A673 (cell line): ENCODE measurements at regions of chr17 and their contacts with region 1.

Region 1: DNA sequence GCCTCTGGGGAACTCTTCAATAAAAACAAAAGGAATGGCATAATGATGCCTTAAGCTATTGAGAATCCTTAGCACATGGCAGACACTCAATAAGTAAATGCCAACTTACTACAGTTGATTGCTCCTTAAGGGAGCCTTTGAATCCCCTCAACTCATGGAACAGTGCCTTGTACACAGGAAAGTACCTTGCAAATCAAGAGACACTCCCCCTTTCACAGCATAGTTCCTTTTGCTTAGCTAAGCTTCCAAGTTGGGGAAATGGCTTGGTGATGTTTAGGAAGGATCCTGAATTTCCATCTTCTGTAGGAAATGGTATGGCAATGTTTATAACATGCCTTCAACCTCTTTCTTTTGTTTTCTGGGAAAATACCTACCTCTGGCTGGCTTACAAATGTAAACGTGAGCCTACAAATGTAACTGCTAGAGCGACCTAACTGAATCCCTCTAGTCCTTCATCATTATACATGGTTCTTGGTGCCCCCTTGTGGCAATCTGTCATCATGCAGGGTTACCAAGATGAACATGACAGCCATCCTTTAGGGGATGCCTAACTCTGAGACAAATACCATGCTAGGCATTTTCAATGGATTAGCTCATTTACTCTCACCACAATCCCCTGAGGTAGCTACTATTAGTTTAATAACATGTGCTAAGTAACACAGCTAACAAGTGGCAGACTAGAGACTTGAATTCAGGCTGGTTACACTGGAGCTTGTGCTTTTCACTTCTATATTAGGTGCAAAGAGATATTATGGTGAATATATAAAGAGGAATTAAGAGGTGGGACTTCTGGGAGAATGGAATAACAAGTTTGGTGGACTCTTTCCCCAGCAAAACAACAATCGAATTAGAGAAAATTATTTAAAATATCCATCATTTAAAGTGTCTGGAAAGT is 65.0 kb downstream of the MMD start:
- DNase-seq: peak; percentile 91
- H3K4me3 ChIP-seq: no peak overlapping the region
- H3K27ac ChIP-seq: no peak overlapping the region
- H3K4me1 ChIP-seq: peaks cover 3% of the 10 kb centered on the region
- H3K27me3 ChIP-seq: no peaks in the 10 kb centered on the region
- CTCF ChIP-seq: peak; percentile 91

Region 2: DNA sequence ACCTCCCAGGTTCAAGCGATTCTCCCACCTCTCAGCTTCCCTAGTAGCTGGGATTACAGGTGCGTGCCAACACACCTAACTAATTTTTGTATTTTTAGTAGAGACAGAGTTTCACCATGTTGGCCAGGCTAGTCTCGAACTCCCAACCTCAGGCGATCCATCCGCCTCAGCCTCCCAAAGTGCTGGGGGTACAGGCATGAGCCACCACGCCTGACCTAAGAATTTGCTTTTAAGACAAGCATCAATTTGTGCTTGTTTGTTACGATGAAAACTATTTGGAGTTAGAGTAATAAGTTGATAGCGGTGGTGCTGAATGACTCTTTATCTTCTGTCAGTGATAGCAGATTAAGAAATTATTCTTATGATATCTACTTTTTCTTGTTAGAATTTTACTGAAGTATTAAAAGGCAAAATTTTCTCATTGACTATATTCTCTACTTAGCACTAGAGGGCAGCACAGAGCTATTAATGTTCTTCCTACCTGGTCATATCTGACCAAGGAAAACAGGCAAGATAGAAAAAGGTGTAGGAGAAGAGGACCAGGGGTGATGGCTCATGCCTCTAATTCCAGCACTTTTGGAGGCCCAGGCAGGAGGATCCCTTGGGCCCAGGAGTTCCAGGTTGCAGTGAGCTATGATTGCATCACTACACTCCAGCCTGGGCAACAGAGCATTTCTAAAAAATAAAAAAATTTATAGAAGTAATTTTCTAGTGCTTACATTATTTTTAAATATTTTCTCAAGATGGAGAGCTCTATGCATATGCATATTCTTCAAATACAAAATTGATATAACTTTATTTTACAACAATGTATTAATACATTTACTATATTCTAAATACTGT is 363.7 kb before region 1 on chr17:
- CTCF ChIA-PET with region 1: interaction called, 10 read pairs
- POLR2A ChIA-PET with region 1: no interaction called
- intact Hi-C with region 1: no loop called
- DNase-seq: peak; percentile 74
- H3K4me3 ChIP-seq: no peak overlapping the region
- H3K27ac ChIP-seq: no peak overlapping the region
- H3K4me1 ChIP-seq: no peaks in the 10 kb centered on the region
- H3K27me3 ChIP-seq: no peaks in the 10 kb centered on the region
- CTCF ChIP-seq: peak; percentile 80

Region 3: GRCh38 chr17:55527540-55528118 is 170.9 kb after region 1 on chr17:
- CTCF ChIA-PET with region 1: no interaction called
- POLR2A ChIA-PET with region 1: no interaction called
- intact Hi-C with region 1: no loop called
- DNase-seq: peak; percentile 79
- H3K4me3 ChIP-seq: no peak overlapping the region
- H3K27ac ChIP-seq: no peak overlapping the region
- H3K4me1 ChIP-seq: peaks cover 9% of the 10 kb centered on the region
- H3K27me3 ChIP-seq: no peaks in the 10 kb centered on the region
- CTCF ChIP-seq: peak; percentile 89